Breast epithelium (tissue), 4 donors: ENCODE measurements at regions of chr12 and their contacts with region 1.

Region 1: GRCh38 chr12:13167766-13168305 is 28.7 kb upstream of the EMP1 start:
- DNase-seq: no peak
- H3K4me3 ChIP-seq: no peak overlapping the region
- H3K27ac ChIP-seq: peak overlapping the region; percentile 53 to 83
- H3K4me1 ChIP-seq: peaks cover 6 to 12% of the 10 kb centered on the region in 2 donors
- H3K27me3 ChIP-seq: no peaks in the 10 kb centered on the region
- CTCF ChIP-seq: no peak
- POLR2A ChIP-seq: no peak

Region 2: GRCh38 chr12:13198920-13199319 is 31.1 kb after region 1 on chr12:
- intact Hi-C with region 1: loop called (anchors 1 kb)
- DNase-seq: no peak
- H3K4me3 ChIP-seq: peak overlapping the region; percentile 63 to 78 (median 71)
- H3K27ac ChIP-seq: peak overlapping the region; percentile 97
- H3K4me1 ChIP-seq: peaks cover 9 to 16% of the 10 kb centered on the region in 2 donors
- H3K27me3 ChIP-seq: no peaks in the 10 kb centered on the region
- CTCF ChIP-seq: no peak
- POLR2A ChIP-seq: no peak

Region 3: GRCh38 chr12:13350946-13351345 is 183.1 kb after region 1 on chr12:
- intact Hi-C with region 1: no loop called
- DNase-seq: no peak
- H3K4me3 ChIP-seq: no peak overlapping the region
- H3K27ac ChIP-seq: no peak overlapping the region
- H3K4me1 ChIP-seq: no peaks in the 10 kb centered on the region
- H3K27me3 ChIP-seq: no peaks in the 10 kb centered on the region
- CTCF ChIP-seq: no peak
- POLR2A ChIP-seq: no peak

Region 4: DNA sequence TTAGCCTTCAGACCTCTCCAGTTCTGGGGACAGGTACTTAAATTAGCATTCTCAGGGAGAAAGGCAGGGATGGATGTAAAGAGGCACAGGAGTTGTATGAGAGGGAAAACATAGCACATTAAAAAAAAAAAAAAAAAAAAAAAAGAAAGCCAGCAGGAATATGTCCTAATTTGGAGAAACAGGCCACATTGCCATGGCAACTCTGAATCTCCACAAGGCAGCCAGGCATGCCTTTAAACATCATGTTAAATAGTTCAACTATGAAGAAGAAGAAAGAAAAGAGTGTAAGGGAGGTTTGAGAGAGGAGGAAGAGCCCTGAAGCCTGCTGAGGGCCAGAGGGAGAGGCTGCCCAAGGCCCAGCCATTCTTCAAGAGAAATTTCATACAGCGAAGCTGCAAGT is 667.8 kb after region 1 on chr12:
- intact Hi-C with region 1: no loop called
- DNase-seq: no peak
- H3K4me3 ChIP-seq: no peak overlapping the region
- H3K27ac ChIP-seq: no peak overlapping the region
- H3K4me1 ChIP-seq: no peaks in the 10 kb centered on the region
- H3K27me3 ChIP-seq: no peaks in the 10 kb centered on the region
- CTCF ChIP-seq: no peak
- POLR2A ChIP-seq: no peak